ENCODE measurements at regions of chr7 and their contacts with region 1.

Region 1: DNA sequence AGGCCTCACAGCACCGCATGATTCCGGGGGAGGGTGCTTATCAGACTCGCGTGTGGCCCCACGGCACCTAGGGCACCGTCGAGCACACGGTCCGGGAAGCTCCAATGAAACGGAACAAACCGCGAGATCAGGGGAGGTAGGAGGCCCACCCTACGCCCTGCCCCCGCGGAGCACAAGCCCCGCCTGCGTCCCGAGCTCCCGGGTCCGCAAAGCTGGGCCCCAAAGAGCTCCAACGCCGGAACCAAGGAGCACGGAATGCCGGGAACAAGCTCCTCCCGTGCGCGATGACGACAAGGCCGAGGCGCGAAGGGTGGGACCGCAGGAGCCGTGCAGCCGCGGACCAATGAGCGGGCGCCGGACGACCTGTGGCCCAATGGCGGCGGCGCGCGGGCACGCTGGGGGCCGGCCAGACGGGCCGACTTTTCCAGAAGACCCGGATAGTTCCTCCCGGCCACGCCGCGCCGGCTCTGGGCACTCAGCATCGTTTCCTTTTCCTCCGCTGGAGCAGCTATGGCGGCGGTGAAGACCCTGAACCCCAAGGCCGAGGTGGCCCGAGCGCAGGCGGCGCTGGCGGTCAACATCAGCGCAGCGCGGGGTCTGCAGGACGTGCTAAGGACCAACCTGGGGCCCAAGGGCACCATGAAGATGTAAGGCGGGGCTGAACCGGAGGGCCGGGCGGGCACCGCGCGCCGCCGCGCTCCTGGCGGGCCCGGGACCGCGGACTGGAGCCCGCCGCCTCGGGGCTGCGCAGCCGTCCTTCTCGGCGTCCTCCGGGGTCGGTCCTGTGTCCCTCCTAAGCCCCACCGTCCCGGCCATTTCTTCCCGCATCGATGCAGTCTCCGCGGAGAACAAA is at the starts of genes CCT6A and PSPH:
- DNase-seq: peak; percentile 88
- ATAC-seq: peak; percentile 90
- H3K4me3 Mint-ChIP-seq: peak within 1 kb of the TSS; percentile 88
- H3K27ac Mint-ChIP-seq: peak within 1 kb of the TSS; percentile 88
- H3K4me1 Mint-ChIP-seq: peaks cover 27% of the 10 kb centered on the region
- H3K27me3 Mint-ChIP-seq: no peaks in the 10 kb centered on the region
- CTCF ChIP-seq: no peak
- total RNA-seq, gene CCT6A: 149 and 158 TPM in 2 replicates
- total RNA-seq, gene PSPH: 7.9 and 9.0 TPM in 2 replicates

Region 2: DNA sequence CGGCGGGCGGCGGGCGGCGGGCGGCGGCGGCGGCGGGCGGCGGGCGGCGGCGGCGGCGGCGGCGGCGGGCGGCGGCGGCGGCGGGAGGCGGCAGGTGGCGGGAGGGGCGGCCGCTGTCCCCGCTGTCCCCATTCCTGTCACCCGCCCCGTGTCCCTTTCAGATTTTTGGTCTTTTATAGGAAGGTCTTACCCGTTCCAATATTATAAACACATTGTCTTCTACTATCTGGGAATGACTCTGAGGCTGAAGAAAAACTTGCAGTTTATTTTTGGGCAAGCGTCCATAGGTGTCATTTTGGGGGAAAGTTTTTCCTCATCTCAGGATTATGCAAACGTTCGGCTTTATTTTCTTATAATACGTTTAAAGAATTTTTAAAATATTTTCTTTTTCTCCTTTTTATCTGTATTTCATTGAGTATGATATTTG is 163.7 kb before region 1 on chr7:
- CTCF ChIA-PET with region 1: no interaction called
- POLR2A ChIA-PET with region 1: interaction called, 4 read pairs
- intact Hi-C with region 1: loop called (anchors 1 kb)
- DNase-seq: no peak
- ATAC-seq: no peak
- H3K4me3 Mint-ChIP-seq: peak overlapping the region; percentile 78
- H3K27ac Mint-ChIP-seq: peak overlapping the region; percentile 60
- H3K4me1 Mint-ChIP-seq: peaks cover 4% of the 10 kb centered on the region
- H3K27me3 Mint-ChIP-seq: no peaks in the 10 kb centered on the region
- CTCF ChIP-seq: no peak

Region 3: GRCh38 chr7:55951637-55952351 is 99.8 kb before region 1 on chr7 and contains the start of gene MRPS17:
- CTCF ChIA-PET with region 1: no interaction called
- POLR2A ChIA-PET with region 1: interaction called, 3 read pairs
- intact Hi-C with region 1: loop called (anchors 5 kb)
- DNase-seq: peak; percentile 84
- ATAC-seq: peak; percentile 100
- H3K4me3 Mint-ChIP-seq: peak within 1 kb of the TSS; percentile 98
- H3K27ac Mint-ChIP-seq: peak within 1 kb of the TSS; percentile 94
- H3K4me1 Mint-ChIP-seq: peaks cover 18% of the 10 kb centered on the region
- H3K27me3 Mint-ChIP-seq: peaks cover 2% of the 10 kb centered on the region
- CTCF ChIP-seq: no peak
- total RNA-seq, gene MRPS17: 16.9 and 20.6 TPM in 2 replicates

Region 4: GRCh38 chr7:55964261-55965099 is 87.1 kb before region 1 on chr7 and contains the start of gene NIPSNAP2:
- CTCF ChIA-PET with region 1: no interaction called
- POLR2A ChIA-PET with region 1: interaction called, 10 read pairs
- intact Hi-C with region 1: loop called (anchors 1 kb)
- DNase-seq: peak; percentile 79
- ATAC-seq: peak; percentile 88
- H3K4me3 Mint-ChIP-seq: peak within 1 kb of the TSS; percentile 86
- H3K27ac Mint-ChIP-seq: peak within 1 kb of the TSS; percentile 88
- H3K4me1 Mint-ChIP-seq: peaks cover 25% of the 10 kb centered on the region
- H3K27me3 Mint-ChIP-seq: no peaks in the 10 kb centered on the region
- CTCF ChIP-seq: no peak
- total RNA-seq, gene NIPSNAP2: 33.7 and 43.8 TPM in 2 replicates

Region 5: GRCh38 chr7:56033671-56034432 is 17.7 kb before region 1 on chr7:
- CTCF ChIA-PET with region 1: no interaction called
- POLR2A ChIA-PET with region 1: interaction called, 14 read pairs
- intact Hi-C with region 1: loop called (anchors 1 kb)
- DNase-seq: peak; percentile 66
- ATAC-seq: peak; percentile 98
- H3K4me3 Mint-ChIP-seq: peak overlapping the region; percentile 84
- H3K27ac Mint-ChIP-seq: peak overlapping the region; percentile 68
- H3K4me1 Mint-ChIP-seq: peaks cover 4% of the 10 kb centered on the region
- H3K27me3 Mint-ChIP-seq: no peaks in the 10 kb centered on the region
- CTCF ChIP-seq: no peak

Region 6: GRCh38 chr7:56063882-56064625 is 12.5 kb after region 1 on chr7 and contains the start of gene SUMF2:
- CTCF ChIA-PET with region 1: interaction called, 5 read pairs
- POLR2A ChIA-PET with region 1: interaction called, 57 read pairs
- intact Hi-C with region 1: loop called (anchors 1 kb)
- DNase-seq: peak; percentile 91
- ATAC-seq: peak; percentile 92
- H3K4me3 Mint-ChIP-seq: peak within 1 kb of the TSS; percentile 92
- H3K27ac Mint-ChIP-seq: peak within 1 kb of the TSS; percentile 85
- H3K4me1 Mint-ChIP-seq: peaks cover 32% of the 10 kb centered on the region
- H3K27me3 Mint-ChIP-seq: no peaks in the 10 kb centered on the region
- CTCF ChIP-seq: no peak
- total RNA-seq, gene SUMF2: 91.1 and 103 TPM in 2 replicates

Region 7: GRCh38 chr7:57381581-57381980 is 1330.0 kb after region 1 on chr7:
- CTCF ChIA-PET with region 1: no interaction called
- POLR2A ChIA-PET with region 1: no interaction called
- intact Hi-C with region 1: no loop called
- DNase-seq: no peak
- ATAC-seq: no peak
- H3K4me3 Mint-ChIP-seq: no peak overlapping the region
- H3K27ac Mint-ChIP-seq: no peak overlapping the region
- H3K4me1 Mint-ChIP-seq: no peaks in the 10 kb centered on the region
- H3K27me3 Mint-ChIP-seq: no peaks in the 10 kb centered on the region
- CTCF ChIP-seq: no peak

Measured in activated B cell treated with CpG ODN at 0.5 μM for 24 hours (primary cell).